Activated T-helper 2 cell treated with anti-CD3 and anti-CD28 coated beads, Interferon-gamma antibody, Interleukin-2, Interleukin-4, amounts not matched to agents 10 μg/mL and 5 μg/mL and 100 μg/mL, durations not matched to agents 14 hours and 24 hours and 36 hours (primary cell): ENCODE measurements at regions of chr11 and their contacts with region 1.

Region 1: DNA sequence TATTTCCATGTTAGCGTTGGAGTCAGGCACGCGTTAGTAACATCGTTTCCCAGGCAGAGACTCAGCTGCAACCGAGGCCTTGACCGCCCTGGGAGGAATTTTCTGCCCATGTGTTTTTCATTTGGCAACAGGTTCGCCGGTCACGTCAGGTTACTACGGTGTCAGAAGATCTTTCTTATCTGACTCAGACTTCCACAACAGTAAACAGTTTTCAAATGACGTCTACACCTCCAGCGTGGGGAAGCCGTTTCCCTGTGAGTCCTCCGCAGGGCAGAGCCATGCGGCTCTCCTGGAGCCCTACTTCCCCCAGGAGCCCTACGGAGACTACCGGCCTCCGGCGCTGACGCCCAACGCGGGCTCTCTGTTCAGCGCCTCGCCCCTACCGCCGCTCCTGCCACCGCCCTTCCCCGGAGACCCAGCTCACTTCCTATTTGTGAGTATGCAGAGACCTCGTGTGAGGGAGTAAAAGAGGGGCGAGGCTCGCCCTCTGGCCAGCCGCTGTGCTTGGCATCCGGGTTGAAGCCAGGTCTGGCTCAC is 14.3 kb upstream of the POU2AF3 start:
- DNase-seq: no peak
- H3K4me3 Mint-ChIP-seq: no peak overlapping the region
- H3K27ac Mint-ChIP-seq: no peak overlapping the region
- H3K4me1 Mint-ChIP-seq: peaks cover 3% of the 10 kb centered on the region
- H3K27me3 Mint-ChIP-seq: peaks cover 7% of the 10 kb centered on the region

Region 2: DNA sequence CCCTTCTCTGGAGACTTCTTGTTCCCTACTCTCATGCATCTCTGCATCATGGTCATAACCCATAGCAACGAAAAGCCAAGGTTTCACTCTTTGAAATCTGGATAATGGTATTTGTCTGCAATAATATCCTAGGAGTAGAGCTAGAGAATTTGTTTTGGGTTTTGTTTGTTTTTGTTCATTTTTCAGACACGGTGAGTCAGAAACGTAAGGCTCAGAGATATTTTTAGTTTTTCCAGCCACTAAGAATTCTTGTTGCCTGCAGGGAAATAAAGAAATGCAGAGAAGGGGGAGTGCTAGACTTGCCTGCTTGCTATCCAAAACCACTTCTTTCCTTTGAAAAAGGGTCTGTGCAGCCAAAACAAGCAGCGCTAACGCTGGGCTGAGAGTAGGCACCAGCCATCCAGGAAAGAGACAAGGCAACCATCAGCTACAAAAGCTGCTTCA is 40.3 kb after region 1 on chr11:
- intact Hi-C with region 1: no loop called
- DNase-seq: no peak
- H3K4me3 Mint-ChIP-seq: no peak overlapping the region
- H3K27ac Mint-ChIP-seq: no peak overlapping the region
- H3K4me1 Mint-ChIP-seq: no peaks in the 10 kb centered on the region
- H3K27me3 Mint-ChIP-seq: peaks cover 9% of the 10 kb centered on the region

Region 3: DNA sequence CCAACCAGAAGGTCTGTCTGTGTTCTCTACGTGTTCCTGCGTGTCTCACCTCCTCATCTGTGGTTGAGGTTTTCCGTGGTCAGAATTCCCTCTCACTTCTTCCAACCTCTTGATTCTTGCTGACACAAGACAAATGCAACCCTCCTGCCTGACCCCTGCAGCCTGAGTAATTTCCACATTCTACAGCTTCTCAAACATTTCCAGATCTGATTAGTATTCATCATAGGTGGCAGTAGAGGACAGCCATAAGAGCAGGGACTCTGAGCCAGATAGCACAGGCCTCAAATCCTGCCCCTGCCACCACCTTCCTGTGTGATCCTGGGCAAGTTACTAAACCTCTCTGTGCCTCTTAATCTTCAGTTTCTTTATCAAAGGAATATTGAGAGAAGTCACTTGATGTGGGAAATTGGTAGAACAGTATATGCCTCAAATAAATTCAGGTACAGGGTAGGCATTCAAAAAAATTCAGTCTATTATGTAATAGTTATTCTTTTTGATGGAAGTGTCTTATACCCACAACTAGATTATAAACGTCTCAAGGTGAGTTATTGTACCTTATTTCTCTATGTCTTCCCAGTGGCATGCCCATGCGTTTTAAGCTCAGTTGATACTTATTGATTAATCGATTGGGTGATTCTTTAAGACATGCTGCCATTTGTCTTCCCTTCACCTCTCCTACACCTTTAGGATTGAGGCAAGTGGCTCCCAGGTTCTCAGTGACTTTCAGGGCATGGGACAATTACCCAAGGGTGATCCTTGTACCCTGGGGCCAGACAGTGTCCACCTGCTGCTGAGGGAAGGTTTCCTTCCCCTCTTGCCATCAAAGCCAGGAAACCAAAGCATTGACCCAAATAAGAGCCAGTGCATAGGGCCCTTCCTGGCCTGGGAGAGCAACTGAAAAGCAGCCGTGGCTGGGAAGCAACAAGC is 75.5 kb after region 1 on chr11:
- intact Hi-C with region 1: loop called (anchors 10 kb)
- DNase-seq: no peak
- H3K4me3 Mint-ChIP-seq: no peak overlapping the region
- H3K27ac Mint-ChIP-seq: no peak overlapping the region
- H3K4me1 Mint-ChIP-seq: peaks cover 10% of the 10 kb centered on the region
- H3K27me3 Mint-ChIP-seq: no peaks in the 10 kb centered on the region

Region 4: GRCh38 chr11:111422494-111423249 is 138.7 kb after region 1 on chr11:
- intact Hi-C with region 1: loop called (anchors 1 kb)
- DNase-seq: peak; percentile 18
- H3K4me3 Mint-ChIP-seq: no peak overlapping the region
- H3K27ac Mint-ChIP-seq: no peak overlapping the region
- H3K4me1 Mint-ChIP-seq: peaks cover 11% of the 10 kb centered on the region
- H3K27me3 Mint-ChIP-seq: peaks cover 2% of the 10 kb centered on the region

Region 5: GRCh38 chr11:111429066-111429506 is 145.1 kb after region 1 on chr11:
- intact Hi-C with region 1: loop called (anchors 1 kb)
- DNase-seq: peak; percentile 35
- H3K4me3 Mint-ChIP-seq: no peak overlapping the region
- H3K27ac Mint-ChIP-seq: no peak overlapping the region
- H3K4me1 Mint-ChIP-seq: peaks cover 2% of the 10 kb centered on the region
- H3K27me3 Mint-ChIP-seq: peaks cover 13% of the 10 kb centered on the region

Region 6: DNA sequence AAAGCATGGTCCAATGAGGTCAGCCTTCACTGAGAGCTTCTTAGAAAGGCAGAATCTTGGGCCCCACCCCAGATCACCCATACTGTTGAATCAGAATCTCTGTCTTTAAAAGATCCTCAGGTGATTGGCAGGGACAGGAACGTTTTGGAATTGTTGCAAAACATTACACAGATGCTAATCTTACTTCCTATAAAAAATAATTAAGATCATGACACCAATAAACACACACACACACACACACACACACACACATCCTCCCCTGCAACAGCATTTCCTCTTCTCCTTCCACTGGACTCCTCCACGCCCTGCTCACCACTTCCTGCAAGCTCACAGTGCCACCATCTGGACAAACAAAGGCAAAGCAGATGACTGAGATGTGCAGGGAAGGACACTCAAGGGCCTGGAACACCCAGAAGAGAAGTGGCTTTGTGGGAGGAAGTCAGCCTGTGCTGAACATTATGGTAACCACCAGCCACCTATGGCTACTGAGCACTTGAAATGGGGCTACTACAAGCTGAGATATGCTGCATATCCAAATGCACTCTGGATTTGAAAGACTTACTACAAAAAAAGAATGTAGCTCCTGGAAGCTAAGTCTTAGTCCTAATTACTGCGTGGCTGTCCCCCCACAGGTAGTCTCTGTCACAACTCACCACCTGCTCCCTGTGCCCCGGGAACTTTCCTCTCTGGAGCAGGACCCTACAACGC is 162.5 kb after region 1 on chr11:
- intact Hi-C with region 1: loop called (anchors 1 kb)
- DNase-seq: peak; percentile 75
- H3K4me3 Mint-ChIP-seq: no peak overlapping the region
- H3K27ac Mint-ChIP-seq: peak overlapping the region; percentile 48
- H3K4me1 Mint-ChIP-seq: peaks cover 14% of the 10 kb centered on the region
- H3K27me3 Mint-ChIP-seq: peaks cover 5% of the 10 kb centered on the region